CD4-positive, alpha-beta T cell (primary cell): ENCODE measurements at regions of chr18 and their contacts with region 1.

Region 1: DNA sequence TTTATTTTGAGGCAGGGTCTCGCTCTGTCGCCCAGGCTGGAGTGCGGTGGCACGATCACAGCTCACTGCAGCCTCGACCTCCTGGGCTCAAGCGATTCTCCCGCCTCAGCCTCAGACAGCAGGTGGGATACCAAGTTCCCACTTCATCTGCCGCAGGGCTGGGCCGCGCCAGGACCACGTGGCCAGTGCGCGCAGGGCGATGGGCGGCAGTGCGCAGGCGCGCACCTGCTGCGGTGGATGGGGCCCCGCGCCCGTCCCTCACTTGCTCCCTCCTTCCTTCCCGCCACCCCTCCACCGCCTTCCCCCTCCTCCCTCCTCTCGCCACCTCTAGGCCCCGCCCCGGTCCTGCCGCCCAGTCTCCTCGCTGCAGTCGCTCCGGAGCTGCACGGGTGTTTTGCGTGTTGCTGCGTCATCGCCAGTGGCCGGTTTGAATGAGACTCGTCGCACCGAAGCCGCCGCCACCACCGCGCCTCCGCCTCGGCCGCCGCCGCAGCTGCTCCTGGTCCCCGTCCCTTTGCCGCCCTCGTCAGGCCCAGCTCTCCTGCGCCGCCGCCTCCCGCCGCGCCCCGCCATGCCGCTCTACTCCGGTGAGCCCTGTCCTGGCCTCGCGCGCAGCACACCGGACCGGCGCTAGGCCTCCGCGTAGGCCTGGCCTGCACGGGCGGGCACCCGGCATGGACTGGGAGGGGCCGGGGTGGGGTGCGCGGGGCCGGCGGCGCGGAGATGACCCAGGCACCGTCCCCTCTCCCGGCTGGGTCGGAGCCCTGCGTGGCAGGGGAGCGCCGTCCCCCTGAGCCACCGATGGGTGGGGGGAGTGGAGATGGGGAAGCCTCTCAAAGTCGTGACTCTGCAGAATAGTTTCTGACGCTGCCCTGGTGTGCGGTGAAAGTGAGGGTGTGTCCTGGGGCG is at the start of gene USP14:
- DNase-seq: peak; percentile 92 to 99 (median 96)
- ATAC-seq: peak; percentile 90
- H3K4me3 ChIP-seq: peak within 1 kb of the TSS; percentile 69
- H3K4me3 Mint-ChIP-seq: peak within 1 kb of the TSS; percentile 97
- H3K27ac ChIP-seq: peak within 1 kb of the TSS; percentile 19 to 74
- H3K27ac Mint-ChIP-seq: peak within 1 kb of the TSS; percentile 95
- H3K4me1 ChIP-seq: peaks cover 19% of the 10 kb centered on the region
- H3K4me1 Mint-ChIP-seq: peaks cover 37% of the 10 kb centered on the region
- H3K27me3 ChIP-seq: no peaks in the 10 kb centered on the region
- H3K27me3 Mint-ChIP-seq: no peaks in the 10 kb centered on the region
- CTCF ChIP-seq: no peak
- total RNA-seq, gene USP14: 51.3 to 56.2 TPM

Region 2: GRCh38 chr18:111292-112014 is 46.9 kb before region 1 on chr18:
- CTCF ChIA-PET with region 1: no interaction called
- POLR2A ChIA-PET with region 1: interaction called, 3 read pairs
- intact Hi-C with region 1: loop called (anchors 2 to 5 kb)
- DNase-seq: peak; percentile 39 to 89 (median 70)
- ATAC-seq: peak; percentile 48
- H3K4me3 ChIP-seq: peak overlapping the region; percentile 41
- H3K4me3 Mint-ChIP-seq: peak overlapping the region; percentile 92
- H3K27ac ChIP-seq: peak overlapping the region in 1 of 2 donors; percentile 84
- H3K27ac Mint-ChIP-seq: peak overlapping the region; percentile 89
- H3K4me1 ChIP-seq: peaks cover 10% of the 10 kb centered on the region
- H3K4me1 Mint-ChIP-seq: peaks cover 15% of the 10 kb centered on the region
- H3K27me3 ChIP-seq: no peaks in the 10 kb centered on the region
- H3K27me3 Mint-ChIP-seq: peaks cover 4% of the 10 kb centered on the region
- CTCF ChIP-seq: no peak

Region 3: GRCh38 chr18:286515-287310 is 128.3 kb after region 1 on chr18:
- CTCF ChIA-PET with region 1: no interaction called
- POLR2A ChIA-PET with region 1: no interaction called
- intact Hi-C with region 1: no loop called
- DNase-seq: no peak
- ATAC-seq: no peak
- H3K4me3 ChIP-seq: no peak overlapping the region
- H3K4me3 Mint-ChIP-seq: no peak overlapping the region
- H3K27ac ChIP-seq: no peak overlapping the region
- H3K27ac Mint-ChIP-seq: no peak overlapping the region
- H3K4me1 ChIP-seq: no peaks in the 10 kb centered on the region
- H3K4me1 Mint-ChIP-seq: no peaks in the 10 kb centered on the region
- H3K27me3 ChIP-seq: peaks cover 0 to 4% of the 10 kb centered on the region in 2 experiments
- H3K27me3 Mint-ChIP-seq: peaks cover 35% of the 10 kb centered on the region
- CTCF ChIP-seq: no peak

Region 4: DNA sequence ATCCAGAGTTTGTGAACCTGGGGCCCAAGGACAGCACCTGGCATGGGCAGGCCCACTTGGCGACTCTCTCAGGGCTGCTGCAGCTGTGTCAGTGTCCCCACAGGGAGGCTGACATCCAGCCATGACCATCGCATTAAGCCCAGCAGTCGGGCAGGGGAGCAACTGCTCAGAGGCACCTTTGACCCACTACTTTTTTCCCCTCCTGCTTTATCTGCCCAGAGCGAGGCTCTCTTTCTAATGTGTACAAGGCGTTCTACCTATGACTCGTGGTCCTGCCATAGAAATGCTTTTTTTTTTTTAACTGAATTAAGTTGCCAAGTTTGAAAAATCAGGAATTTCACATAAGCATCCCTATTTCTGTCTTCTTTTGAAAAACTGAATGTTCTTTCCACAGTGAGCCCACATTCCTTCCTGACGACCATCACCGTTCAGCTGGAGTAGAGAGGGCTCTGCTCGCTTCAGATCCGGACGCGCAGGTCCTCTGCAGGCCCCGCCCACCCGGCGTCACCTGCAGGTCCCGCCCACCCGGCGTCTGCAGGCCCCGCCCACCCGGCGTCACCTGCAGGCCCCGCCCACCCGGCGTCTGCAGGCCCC is 438.0 kb after region 1 on chr18:
- CTCF ChIA-PET with region 1: no interaction called
- POLR2A ChIA-PET with region 1: no interaction called
- intact Hi-C with region 1: loop called in 1 of 2 experiments (anchors 2 kb)
- DNase-seq: peak in 3 of 14 experiments; percentile 68 to 84 (median 83)
- ATAC-seq: peak; percentile 69
- H3K4me3 ChIP-seq: no peak overlapping the region
- H3K4me3 Mint-ChIP-seq: peak overlapping the region; percentile 42
- H3K27ac ChIP-seq: no peak overlapping the region
- H3K27ac Mint-ChIP-seq: no peak overlapping the region
- H3K4me1 ChIP-seq: peaks cover 13% of the 10 kb centered on the region
- H3K4me1 Mint-ChIP-seq: peaks cover 10% of the 10 kb centered on the region
- H3K27me3 ChIP-seq: peaks cover 3 to 28% of the 10 kb centered on the region in 2 experiments
- H3K27me3 Mint-ChIP-seq: peaks cover 55% of the 10 kb centered on the region
- CTCF ChIP-seq: no peak